ENCODE measurements at regions of chr17 and their contacts with region 1.

Region 1: GRCh38 chr17:59914274-59914854 is 21.4 kb downstream of the RPS6KB1 start:
- DNase-seq: peak; percentile 60
- ATAC-seq: peak; percentile 81
- H3K4me3 ChIP-seq: no peak overlapping the region
- H3K27ac ChIP-seq: no peak overlapping the region
- H3K4me1 ChIP-seq: no peaks in the 10 kb centered on the region
- H3K27me3 ChIP-seq: no peaks in the 10 kb centered on the region
- CTCF ChIP-seq: peak; percentile 64
- POLR2A ChIP-seq: no peak
- RAD21 ChIP-seq: peak; percentile 55

Region 2: DNA sequence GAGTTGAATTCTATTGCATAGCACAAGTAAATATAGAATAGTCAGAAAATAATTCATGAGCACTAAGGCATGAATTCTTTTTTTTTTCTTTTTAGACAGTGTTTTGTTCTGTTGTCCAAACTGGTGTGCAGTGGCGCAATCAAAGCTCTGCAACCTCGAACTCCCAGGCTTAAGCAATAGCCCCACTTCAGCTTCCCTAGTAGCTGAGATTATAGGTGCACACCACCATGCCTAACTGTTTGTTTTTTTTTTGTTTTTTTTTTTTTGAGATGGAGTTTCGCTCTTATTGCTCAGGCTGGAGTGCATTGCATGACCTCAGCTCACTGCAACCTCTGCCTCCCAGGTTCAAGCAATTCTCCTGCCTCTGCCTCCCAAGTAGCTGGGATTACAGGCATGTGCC is 38.3 kb before region 1 on chr17:
- CTCF ChIA-PET with region 1: interaction called, 14 read pairs
- POLR2A ChIA-PET with region 1: no interaction called
- dilution Hi-C with region 1: no loop called
- in situ Hi-C with region 1: no loop called
- intact Hi-C with region 1: no loop called
- DNase-seq: peak; percentile 21
- ATAC-seq: no peak
- H3K4me3 ChIP-seq: no peak overlapping the region
- H3K27ac ChIP-seq: no peak overlapping the region
- H3K4me1 ChIP-seq: no peaks in the 10 kb centered on the region
- H3K27me3 ChIP-seq: no peaks in the 10 kb centered on the region
- CTCF ChIP-seq: no peak
- POLR2A ChIP-seq: no peak
- RAD21 ChIP-seq: no peak

Region 3: DNA sequence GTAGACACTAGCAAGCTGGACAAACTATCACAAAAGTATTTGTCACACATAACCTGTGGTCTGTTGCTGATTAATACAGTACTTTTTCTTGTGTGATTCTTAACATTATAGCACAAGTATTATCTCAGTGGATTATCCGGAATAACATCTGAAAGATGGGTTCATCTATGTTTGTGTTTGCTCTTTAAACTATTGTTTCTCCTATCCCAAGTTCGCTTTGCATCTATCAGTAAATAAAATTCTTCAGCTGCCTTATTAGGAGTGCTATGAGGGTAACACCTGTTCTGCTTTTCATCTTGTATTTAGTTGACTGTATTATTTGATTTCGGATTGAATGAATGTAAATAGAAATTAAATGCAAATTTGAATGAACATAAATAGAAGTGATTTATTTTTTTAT is 35.7 kb after region 1 on chr17:
- CTCF ChIA-PET with region 1: no interaction called
- POLR2A ChIA-PET with region 1: no interaction called
- dilution Hi-C with region 1: no loop called
- in situ Hi-C with region 1: no loop called
- intact Hi-C with region 1: loop called (anchors 5 kb)
- DNase-seq: no peak
- ATAC-seq: no peak
- H3K4me3 ChIP-seq: no peak overlapping the region
- H3K27ac ChIP-seq: no peak overlapping the region
- H3K4me1 ChIP-seq: no peaks in the 10 kb centered on the region
- H3K27me3 ChIP-seq: no peaks in the 10 kb centered on the region
- CTCF ChIP-seq: no peak
- POLR2A ChIP-seq: no peak
- RAD21 ChIP-seq: no peak

Measured in IMR-90 (cell line).